Psoas muscle (tissue), 8 donors: ENCODE measurements at regions of chr2 and their contacts with region 1.

Region 1: GRCh38 chr2:99648178-99648844 is 158.5 kb upstream of the REV1 start:
- DNase-seq: no peak
- ATAC-seq: peak; percentile 39 to 77 (median 46)
- H3K4me3 ChIP-seq: no peak overlapping the region
- H3K27ac ChIP-seq: peak overlapping the region; percentile 51
- H3K4me1 ChIP-seq: peaks cover 11% of the 10 kb centered on the region
- H3K27me3 ChIP-seq: no peaks in the 10 kb centered on the region
- CTCF ChIP-seq: no peak

Region 2: GRCh38 chr2:99689145-99689742 is 40.9 kb after region 1 on chr2:
- intact Hi-C with region 1: loop called in 1 of 2 experiments (anchors 5 kb)
- DNase-seq: no peak
- ATAC-seq: peak; percentile 88 to 94 (median 91)
- H3K4me3 ChIP-seq: no peak overlapping the region
- H3K27ac ChIP-seq: no peak overlapping the region
- H3K4me1 ChIP-seq: peaks cover 10% of the 10 kb centered on the region
- H3K27me3 ChIP-seq: no peaks in the 10 kb centered on the region
- CTCF ChIP-seq: no peak